Activated CD4-positive, alpha-beta T cell treated with anti-CD3 and anti-CD28 coated beads, Interleukin-2, amount 10 ng/mL, durations not matched to agents 24 days and 14 days (primary cell): ENCODE measurements at regions of chr16 and their contacts with region 1.

Region 1: GRCh38 chr16:15949210-15950160 is at the start of gene ABCC1:
- DNase-seq: peak; percentile 85
- H3K4me3 Mint-ChIP-seq: peak within 1 kb of the TSS; percentile 94
- H3K27ac Mint-ChIP-seq: peak within 1 kb of the TSS; percentile 100
- H3K4me1 Mint-ChIP-seq: peaks cover 42% of the 10 kb centered on the region
- H3K27me3 Mint-ChIP-seq: no peaks in the 10 kb centered on the region
- total RNA-seq, gene ABCC1: 92.2 and 93.5 TPM in 2 replicates

Region 2: DNA sequence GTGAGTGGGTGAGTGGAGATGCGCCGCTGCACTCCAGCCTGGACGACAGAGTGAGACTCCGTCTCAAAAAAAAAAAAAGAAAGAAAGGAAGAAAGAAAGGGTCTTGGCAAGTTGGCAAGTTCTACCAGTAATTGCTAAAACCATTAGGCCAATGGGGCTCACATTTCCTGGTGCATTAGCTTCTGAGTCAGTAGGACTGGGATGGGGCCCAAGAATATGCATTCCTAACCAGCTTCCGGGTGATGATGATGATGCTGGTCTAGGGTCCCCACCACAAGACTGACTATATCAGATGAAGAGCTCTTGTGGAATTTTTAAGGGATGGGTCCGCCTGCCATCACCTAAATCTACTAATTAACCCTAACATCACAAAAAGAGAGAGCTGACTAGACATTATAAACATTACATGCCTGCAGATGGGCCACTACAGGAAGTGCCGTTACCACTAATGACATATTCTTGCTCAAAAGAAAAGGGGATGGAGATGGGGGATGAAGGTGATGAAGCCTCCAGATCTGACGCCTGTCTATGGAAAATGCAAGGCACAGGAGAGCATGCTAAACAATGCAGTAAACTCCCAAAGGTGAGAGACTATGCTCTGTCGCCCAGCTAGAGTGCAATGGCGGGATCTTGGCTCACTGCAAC is 105.7 kb before region 1 on chr16:
- intact Hi-C with region 1: no loop called
- DNase-seq: no peak
- H3K4me3 Mint-ChIP-seq: no peak overlapping the region
- H3K27ac Mint-ChIP-seq: no peak overlapping the region
- H3K4me1 Mint-ChIP-seq: no peaks in the 10 kb centered on the region
- H3K27me3 Mint-ChIP-seq: peaks cover 2% of the 10 kb centered on the region

Region 3: DNA sequence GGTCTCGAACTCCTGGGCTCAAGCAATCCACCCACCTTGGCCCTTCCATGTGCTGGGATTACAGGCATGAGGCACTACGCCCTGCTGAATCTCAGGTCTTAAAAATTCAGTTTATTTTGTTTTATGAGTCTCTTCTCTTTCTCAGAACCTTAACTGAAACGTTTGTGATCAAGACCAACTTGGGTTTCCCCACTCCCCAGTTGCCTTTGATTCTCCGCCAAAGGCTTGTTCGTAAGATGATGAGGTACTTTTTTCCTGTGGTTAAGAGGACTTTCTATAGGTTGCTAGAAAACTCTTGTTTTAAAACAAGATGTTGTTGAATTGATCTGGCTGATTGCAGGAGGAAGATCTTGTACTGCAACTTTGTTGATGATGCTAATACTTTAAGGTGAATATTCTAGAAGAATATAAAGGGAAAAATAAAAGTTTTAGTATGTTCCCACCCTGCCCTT is 11.6 kb after region 1 on chr16:
- intact Hi-C with region 1: loop called (anchors 1 kb)
- DNase-seq: peak; percentile 94
- H3K4me3 Mint-ChIP-seq: peak overlapping the region; percentile 68
- H3K27ac Mint-ChIP-seq: peak overlapping the region; percentile 96
- H3K4me1 Mint-ChIP-seq: peaks cover 60% of the 10 kb centered on the region
- H3K27me3 Mint-ChIP-seq: no peaks in the 10 kb centered on the region

Region 4: DNA sequence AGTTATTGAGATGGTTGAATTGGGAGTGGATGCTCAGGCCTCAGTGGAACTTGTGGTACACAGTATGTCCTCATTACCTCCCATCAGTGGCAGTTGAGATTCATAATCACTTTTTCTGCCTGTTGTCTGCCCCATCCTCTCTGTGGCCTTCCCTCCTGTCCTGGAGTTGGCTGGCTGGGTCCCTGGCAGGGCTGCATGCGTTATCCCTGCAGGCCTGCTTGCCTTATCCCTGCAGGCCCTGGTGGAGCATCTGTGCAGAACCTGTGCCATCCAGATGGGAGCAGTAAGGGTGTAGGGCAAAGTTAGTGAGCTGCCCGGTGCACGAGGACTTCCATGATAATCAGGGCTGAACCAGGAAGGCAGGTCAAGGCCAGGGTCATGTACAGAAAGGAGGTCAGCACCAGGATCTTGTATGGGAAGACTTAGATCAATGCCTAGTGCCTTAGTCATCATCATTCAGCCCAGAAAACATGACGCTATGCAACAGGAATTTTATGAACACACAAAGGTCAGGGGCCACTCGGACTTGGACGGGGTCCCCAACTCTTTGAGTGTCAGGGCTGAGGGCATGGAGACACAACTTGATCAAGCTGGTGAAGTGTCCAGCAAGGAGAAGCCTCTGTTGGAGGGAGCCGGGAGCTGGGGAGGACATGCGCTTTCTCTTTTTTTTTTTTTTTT is 47.1 kb after region 1 on chr16:
- intact Hi-C with region 1: loop called (anchors 5 kb)
- DNase-seq: no peak
- H3K4me3 Mint-ChIP-seq: no peak overlapping the region
- H3K27ac Mint-ChIP-seq: peak overlapping the region; percentile 56
- H3K4me1 Mint-ChIP-seq: peaks cover 41% of the 10 kb centered on the region
- H3K27me3 Mint-ChIP-seq: no peaks in the 10 kb centered on the region

Region 5: GRCh38 chr16:16025214-16025968 is 75.9 kb after region 1 on chr16:
- intact Hi-C with region 1: loop called (anchors 1 kb)
- DNase-seq: peak; percentile 81
- H3K4me3 Mint-ChIP-seq: peak overlapping the region; percentile 60
- H3K27ac Mint-ChIP-seq: peak overlapping the region; percentile 92
- H3K4me1 Mint-ChIP-seq: peaks cover 41% of the 10 kb centered on the region
- H3K27me3 Mint-ChIP-seq: no peaks in the 10 kb centered on the region

Region 6: DNA sequence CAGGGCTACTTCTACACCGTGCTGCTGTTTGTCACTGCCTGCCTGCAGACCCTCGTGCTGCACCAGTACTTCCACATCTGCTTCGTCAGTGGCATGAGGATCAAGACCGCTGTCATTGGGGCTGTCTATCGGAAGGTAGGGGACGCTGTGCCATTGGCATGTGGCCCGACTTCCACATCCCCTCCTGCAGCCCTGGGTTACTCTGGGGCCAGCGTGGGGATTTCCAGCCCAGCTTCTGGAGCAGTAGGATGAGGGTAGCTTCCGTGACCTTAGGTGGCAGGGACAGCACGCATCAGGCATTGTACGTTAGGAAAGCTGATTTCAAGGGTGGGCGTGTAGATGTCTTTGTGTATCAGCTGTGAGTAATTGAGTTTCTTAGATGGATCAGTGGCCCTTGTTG is 96.4 kb after region 1 on chr16:
- intact Hi-C with region 1: loop called (anchors 5 kb)
- DNase-seq: peak; percentile 62
- H3K4me3 Mint-ChIP-seq: no peak overlapping the region
- H3K27ac Mint-ChIP-seq: no peak overlapping the region
- H3K4me1 Mint-ChIP-seq: peaks cover 17% of the 10 kb centered on the region
- H3K27me3 Mint-ChIP-seq: no peaks in the 10 kb centered on the region